Activated naive CD4-positive, alpha-beta T cell treated with anti-CD3 and anti-CD28 coated beads for 36 hours (primary cell): ENCODE measurements at regions of chr3 and their contacts with region 1.

Region 1: DNA sequence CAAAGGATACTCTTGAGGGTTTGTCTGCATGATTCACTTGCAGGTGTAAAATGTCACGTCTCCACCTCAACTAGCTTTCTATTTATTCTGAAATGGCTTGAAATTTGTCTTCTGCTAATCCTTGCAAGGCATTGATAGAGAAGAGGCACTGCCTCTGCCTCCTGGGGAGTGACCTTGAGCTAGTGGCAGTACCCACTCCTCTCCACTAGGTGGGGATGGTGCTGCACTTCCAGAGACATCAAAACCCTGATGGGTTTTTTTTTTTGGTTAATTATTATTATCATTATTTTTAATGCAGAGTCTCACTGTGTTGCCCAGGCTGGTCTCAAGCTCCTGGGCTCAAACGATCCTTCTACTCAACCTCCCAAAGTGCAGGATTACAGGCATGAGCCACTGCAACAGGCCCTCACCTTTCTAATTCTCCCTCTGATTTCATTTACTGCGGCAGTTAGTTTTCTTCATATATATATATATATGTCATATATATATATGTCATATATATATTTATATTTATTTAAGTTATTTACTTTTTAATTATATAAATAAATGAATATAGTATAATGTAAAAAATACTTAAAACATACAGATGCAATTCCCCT is 117.6 kb upstream of the EIF1B start:
- DNase-seq: peak; percentile 73
- H3K4me3 Mint-ChIP-seq: no peak overlapping the region
- H3K27ac Mint-ChIP-seq: no peak overlapping the region
- H3K4me1 Mint-ChIP-seq: no peaks in the 10 kb centered on the region
- H3K27me3 Mint-ChIP-seq: no peaks in the 10 kb centered on the region

Region 2: DNA sequence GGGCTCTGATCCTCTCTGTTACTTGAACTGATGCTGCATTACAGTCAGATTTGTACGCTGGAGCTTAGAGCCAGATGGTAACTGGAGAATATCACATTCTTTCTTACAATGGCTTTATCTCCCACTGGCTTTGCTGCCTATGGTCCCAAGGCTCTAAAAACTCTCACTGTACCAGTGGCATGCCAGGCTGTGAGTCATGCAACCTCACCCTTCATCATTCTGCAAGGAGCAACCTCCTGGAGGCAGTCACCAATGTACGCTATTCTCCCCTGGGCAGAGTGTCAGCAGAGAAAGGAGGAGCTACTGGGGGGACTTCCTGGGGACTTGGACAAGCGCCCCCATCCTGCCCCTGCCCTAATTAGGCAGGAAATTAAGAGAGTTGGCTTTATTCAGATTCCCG is 19.6 kb after region 1 on chr3:
- CTCF ChIA-PET with region 1: interaction called, 11 read pairs
- intact Hi-C with region 1: no loop called
- DNase-seq: no peak
- H3K4me3 Mint-ChIP-seq: no peak overlapping the region
- H3K27ac Mint-ChIP-seq: no peak overlapping the region
- H3K4me1 Mint-ChIP-seq: peaks cover 2% of the 10 kb centered on the region
- H3K27me3 Mint-ChIP-seq: no peaks in the 10 kb centered on the region

Region 3: DNA sequence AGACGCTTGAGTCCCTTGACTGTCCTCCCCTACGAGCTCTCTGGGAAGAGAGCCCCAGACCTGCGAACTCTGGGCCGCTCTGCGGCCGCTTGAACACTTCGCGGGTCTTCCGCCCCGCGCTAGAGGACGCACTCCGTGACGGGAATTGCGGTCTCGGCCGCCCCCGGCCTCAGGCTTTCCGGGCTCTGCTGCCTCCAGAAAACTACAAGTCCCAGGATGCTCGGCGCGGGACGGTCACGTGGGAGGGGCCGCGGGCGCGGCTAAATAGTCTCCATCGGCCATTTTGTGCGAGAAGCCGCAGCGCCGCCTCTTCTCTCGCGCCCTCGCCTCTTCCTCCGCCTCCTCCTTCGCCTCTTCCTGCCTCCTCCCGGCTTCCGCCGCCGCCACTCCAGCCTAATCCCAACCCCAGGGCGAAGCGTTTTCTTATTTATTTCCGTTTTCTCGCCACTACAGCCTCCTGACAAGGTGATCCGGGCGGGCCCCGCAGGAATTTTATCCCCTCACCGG is 117.5 kb after region 1 on chr3 and contains the start of gene EIF1B:
- CTCF ChIA-PET with region 1: interaction called, 133 read pairs
- intact Hi-C with region 1: no loop called
- DNase-seq: peak; percentile 99
- H3K4me3 Mint-ChIP-seq: peak within 1 kb of the TSS; percentile 99
- H3K27ac Mint-ChIP-seq: peak within 1 kb of the TSS; percentile 98
- H3K4me1 Mint-ChIP-seq: peaks cover 24% of the 10 kb centered on the region
- H3K27me3 Mint-ChIP-seq: no peaks in the 10 kb centered on the region
- total RNA-seq, gene EIF1B: 47.0 to 49.2 TPM